A549 (cell line): ENCODE measurements at regions of chr11 and their contacts with region 1.

Region 1: GRCh38 chr11:69704508-69705253 is 859 bp upstream of the FGF19 start:
- DNase-seq: peak; percentile 46 to 60
- ATAC-seq: peak; percentile 75 to 89; a peak in 5 of 6 replicates
- H3K4me3 ChIP-seq: peak overlapping the region; percentile 52
- H3K27ac ChIP-seq: peak overlapping the region; percentile 58 to 79; a peak in 5 of 6 replicates
- H3K4me1 ChIP-seq: peaks cover 14% of the 10 kb centered on the region
- CTCF ChIP-seq: peak; percentile 89
- EP300 ChIP-seq: no peak
- POLR2A ChIP-seq: no peak
- RAD21 ChIP-seq: peak; percentile 67 to 91

Region 2: DNA sequence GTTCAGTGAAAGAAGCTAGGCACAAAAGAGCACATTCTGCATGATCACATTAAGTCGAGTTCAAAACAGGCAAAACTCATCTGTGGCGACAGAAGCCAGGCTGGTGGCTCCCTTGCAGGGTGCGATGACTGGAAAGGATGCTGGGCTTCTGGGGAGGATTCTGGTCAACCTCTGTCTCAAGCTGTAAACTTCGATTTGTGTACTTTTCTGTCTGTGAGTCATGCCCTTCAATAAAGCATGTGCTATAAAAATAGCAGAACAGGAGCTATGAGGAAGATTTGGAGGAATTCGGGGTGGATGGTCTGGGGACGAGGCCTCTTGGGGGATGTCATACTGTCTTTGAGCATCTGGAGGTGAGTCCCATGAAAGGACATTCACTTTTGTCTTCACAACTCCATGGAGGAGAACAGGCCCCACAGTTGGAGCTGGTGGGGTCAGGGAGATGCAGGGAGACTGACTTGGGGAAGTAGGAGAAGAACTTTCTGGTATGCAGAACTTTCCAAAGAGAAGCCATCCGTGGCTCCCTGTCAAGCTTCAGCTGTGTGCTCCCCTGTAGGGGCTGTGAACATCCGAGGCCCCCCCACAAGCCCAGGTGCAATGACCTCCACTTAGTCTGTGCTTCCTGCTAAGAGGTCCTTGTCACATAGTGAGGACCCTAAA is 301.0 kb before region 1 on chr11:
- CTCF ChIA-PET with region 1: no interaction called
- POLR2A ChIA-PET with region 1: no interaction called
- DNase-seq: peak; percentile 25 to 37
- ATAC-seq: peak in 1 of 2 experiments; percentile 58; a peak in 2 of 6 replicates
- H3K4me3 ChIP-seq: no peak overlapping the region
- H3K27ac ChIP-seq: peak overlapping the region in 1 of 2 experiments; percentile 59; a peak in 2 of 6 replicates
- H3K4me1 ChIP-seq: peaks cover 9% of the 10 kb centered on the region
- CTCF ChIP-seq: no peak
- EP300 ChIP-seq: no peak
- POLR2A ChIP-seq: no peak
- RAD21 ChIP-seq: no peak

Region 3: DNA sequence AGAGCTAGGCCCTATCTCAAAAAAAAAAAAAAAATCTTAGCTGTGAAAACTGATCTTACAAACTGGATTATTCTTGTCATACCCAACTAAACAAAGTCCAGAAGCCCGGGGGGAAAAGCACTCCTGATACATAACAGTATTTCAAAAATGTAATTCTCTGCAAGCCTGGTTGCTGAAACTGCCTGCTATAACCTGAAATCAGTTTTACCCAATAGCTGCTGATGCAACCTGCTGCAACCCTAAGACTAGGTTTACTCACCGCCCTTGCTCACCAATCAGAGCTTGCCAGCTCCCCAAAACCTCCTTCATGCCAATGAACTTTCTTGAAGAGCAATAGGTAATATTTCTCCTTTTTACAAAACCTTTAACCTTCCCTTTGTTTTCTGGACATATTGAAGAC is 13.2 kb before region 1 on chr11:
- CTCF ChIA-PET with region 1: interaction called, 10 read pairs
- POLR2A ChIA-PET with region 1: no interaction called
- DNase-seq: peak in 1 of 2 experiments; percentile 49
- ATAC-seq: no peak
- H3K4me3 ChIP-seq: no peak overlapping the region
- H3K27ac ChIP-seq: peak overlapping the region; percentile 28 to 46; a peak in 1 of 6 replicates
- H3K4me1 ChIP-seq: peaks cover 19% of the 10 kb centered on the region; the same call in 2 of the 3 replicates
- CTCF ChIP-seq: no peak
- EP300 ChIP-seq: no peak
- POLR2A ChIP-seq: no peak
- RAD21 ChIP-seq: no peak

Region 4: GRCh38 chr11:69718147-69718546 is 13.5 kb after region 1 on chr11:
- CTCF ChIA-PET with region 1: interaction called, 25 read pairs
- POLR2A ChIA-PET with region 1: no interaction called
- DNase-seq: peak; percentile 38 to 60
- ATAC-seq: peak; percentile 48 to 85; a peak in 4 of 6 replicates
- H3K4me3 ChIP-seq: no peak overlapping the region
- H3K27ac ChIP-seq: no peak overlapping the region
- H3K4me1 ChIP-seq: no peaks in the 10 kb centered on the region
- CTCF ChIP-seq: peak; percentile 43
- EP300 ChIP-seq: no peak
- POLR2A ChIP-seq: no peak
- RAD21 ChIP-seq: peak; percentile 42 to 51; a peak in 4 of 5 replicates

Region 5: GRCh38 chr11:69801519-69802335 is 97.0 kb after region 1 on chr11:
- CTCF ChIA-PET with region 1: interaction called, 12 read pairs
- POLR2A ChIA-PET with region 1: no interaction called
- DNase-seq: peak in 1 of 2 experiments; percentile 32
- ATAC-seq: peak in 1 of 2 experiments; percentile 58; a peak in 3 of 6 replicates
- H3K4me3 ChIP-seq: no peak overlapping the region
- H3K27ac ChIP-seq: no peak overlapping the region
- H3K4me1 ChIP-seq: no peaks in the 10 kb centered on the region
- CTCF ChIP-seq: peak; percentile 52
- EP300 ChIP-seq: no peak
- POLR2A ChIP-seq: no peak
- RAD21 ChIP-seq: peak; percentile 42

Region 6: GRCh38 chr11:69841859-69842698 is 137.4 kb after region 1 on chr11:
- CTCF ChIA-PET with region 1: interaction called, 15 read pairs
- POLR2A ChIA-PET with region 1: no interaction called
- DNase-seq: peak in 1 of 2 experiments; percentile 44
- ATAC-seq: peak; percentile 20 to 64; a peak in 3 of 6 replicates
- H3K4me3 ChIP-seq: no peak overlapping the region
- H3K27ac ChIP-seq: no peak overlapping the region
- H3K4me1 ChIP-seq: 0 out of 3 replicates have a peak, but pooled peaks cover 5% of the 10 kb centered on the region
- CTCF ChIP-seq: peak; percentile 66
- EP300 ChIP-seq: no peak
- POLR2A ChIP-seq: no peak
- RAD21 ChIP-seq: peak; percentile 33 to 50; a peak in 3 of 5 replicates

Region 7: GRCh38 chr11:69888483-69889076 is 183.9 kb after region 1 on chr11:
- CTCF ChIA-PET with region 1: interaction called, 120 read pairs
- POLR2A ChIA-PET with region 1: no interaction called
- DNase-seq: peak; percentile 68 to 86
- ATAC-seq: peak; percentile 79 to 87
- H3K4me3 ChIP-seq: no peak overlapping the region
- H3K27ac ChIP-seq: no peak overlapping the region
- H3K4me1 ChIP-seq: no peaks in the 10 kb centered on the region
- CTCF ChIP-seq: peak; percentile 93
- EP300 ChIP-seq: no peak
- POLR2A ChIP-seq: no peak
- RAD21 ChIP-seq: peak; percentile 73 to 82

Region 8: GRCh38 chr11:69909561-69910496 is 205.1 kb after region 1 on chr11:
- CTCF ChIA-PET with region 1: interaction called, 70 read pairs
- POLR2A ChIA-PET with region 1: no interaction called
- DNase-seq: no peak
- ATAC-seq: peak in 1 of 2 experiments; percentile 68; a peak in 3 of 6 replicates
- H3K4me3 ChIP-seq: no peak overlapping the region
- H3K27ac ChIP-seq: peak overlapping the region in 1 of 2 experiments; percentile 23; a peak in 1 of 6 replicates
- H3K4me1 ChIP-seq: peaks cover 20% of the 10 kb centered on the region
- CTCF ChIP-seq: peak; percentile 84
- EP300 ChIP-seq: no peak
- POLR2A ChIP-seq: no peak
- RAD21 ChIP-seq: peak; percentile 32; a peak in 3 of 5 replicates